Sigmoid colon (tissue), 7 donors: ENCODE measurements at regions of chr10 and their contacts with region 1.

Region 1: GRCh38 chr10:93376372-93377293 is 105.5 kb downstream of the MYOF start:
- DNase-seq: peak; percentile 87
- H3K4me3 ChIP-seq: peak overlapping the region in 2 of 4 donors; percentile 5 to 22
- H3K27ac ChIP-seq: peak overlapping the region; percentile 82 to 90 (median 84)
- H3K4me1 ChIP-seq: peaks cover 0 to 43% (median 30%) of the 10 kb centered on the region in 4 donors
- H3K27me3 ChIP-seq: no peaks in the 10 kb centered on the region
- CTCF ChIP-seq: peak; percentile 91 to 98 (median 97)
- EP300 ChIP-seq: no peak
- POLR2A ChIP-seq: peak in 1 of 2 donors; percentile 34

Region 2: DNA sequence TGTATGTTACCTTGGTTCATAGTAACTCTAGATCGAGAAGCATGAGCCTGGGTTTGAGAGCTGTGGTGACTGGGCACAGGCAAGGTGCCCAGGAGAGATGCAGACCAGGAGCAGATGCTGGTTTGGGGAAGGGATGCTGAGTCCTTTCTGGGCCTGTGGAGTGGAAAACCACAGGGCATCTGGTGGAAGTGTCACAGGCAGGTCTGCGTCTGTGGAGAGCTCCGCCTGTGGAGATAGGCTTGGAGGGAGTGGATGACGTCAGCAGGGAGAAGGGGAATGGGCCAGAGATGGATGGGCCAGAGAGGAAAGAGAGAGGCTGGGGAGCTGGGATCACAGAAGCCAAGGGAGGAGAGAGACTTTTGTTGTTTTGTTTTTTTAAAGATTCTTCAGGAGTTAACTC is 288.2 kb before region 1 on chr10:
- intact Hi-C with region 1: no loop called
- DNase-seq: no peak
- H3K4me3 ChIP-seq: no peak overlapping the region
- H3K27ac ChIP-seq: no peak overlapping the region
- H3K4me1 ChIP-seq: no peaks in the 10 kb centered on the region
- H3K27me3 ChIP-seq: no peaks in the 10 kb centered on the region
- CTCF ChIP-seq: no peak
- EP300 ChIP-seq: no peak
- POLR2A ChIP-seq: no peak

Region 3: DNA sequence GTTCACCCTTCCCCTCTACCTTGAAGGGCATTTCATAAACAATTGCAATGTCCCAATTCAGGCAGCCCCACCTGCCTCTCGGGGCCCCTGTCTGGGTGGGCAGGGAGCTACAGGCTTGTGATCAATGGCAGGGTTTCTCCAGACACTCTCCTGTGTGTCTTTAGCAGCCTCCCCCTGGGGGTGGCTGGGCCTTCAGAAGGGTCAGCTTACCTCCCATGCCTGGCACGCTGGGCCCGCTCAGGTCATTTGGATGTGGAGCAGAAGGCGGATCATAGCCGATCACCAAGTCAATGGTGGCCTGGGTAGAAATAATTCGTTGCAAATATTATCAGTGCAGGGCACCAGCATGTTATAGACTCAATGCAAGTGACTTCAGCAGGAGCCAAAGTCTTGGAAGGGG is 49.2 kb after region 1 on chr10:
- intact Hi-C with region 1: loop called (anchors 5 kb)
- DNase-seq: no peak
- H3K4me3 ChIP-seq: no peak overlapping the region
- H3K27ac ChIP-seq: peak overlapping the region in 1 of 4 donors; percentile 39
- H3K4me1 ChIP-seq: peaks cover 0 to 39% (median 27%) of the 10 kb centered on the region in 4 donors
- H3K27me3 ChIP-seq: no peaks in the 10 kb centered on the region
- CTCF ChIP-seq: no peak
- EP300 ChIP-seq: no peak
- POLR2A ChIP-seq: no peak

Region 4: GRCh38 chr10:93482145-93482834 is 105.7 kb after region 1 on chr10 and contains the start of gene MYOF:
- intact Hi-C with region 1: loop called (anchors 1 kb)
- DNase-seq: peak; percentile 88
- H3K4me3 ChIP-seq: peak within 1 kb of the TSS; percentile 54 to 65 (median 58)
- H3K27ac ChIP-seq: peak within 1 kb of the TSS; percentile 84 to 95 (median 91)
- H3K4me1 ChIP-seq: peaks cover 0 to 37% (median 28%) of the 10 kb centered on the region in 4 donors
- H3K27me3 ChIP-seq: no peaks in the 10 kb centered on the region
- CTCF ChIP-seq: peak; percentile 32 to 64 (median 54)
- EP300 ChIP-seq: no peak
- POLR2A ChIP-seq: peak; percentile 78 to 91
- total RNA-seq, gene MYOF: 33.6 to 83.4 (median 70.2) TPM

Region 5: DNA sequence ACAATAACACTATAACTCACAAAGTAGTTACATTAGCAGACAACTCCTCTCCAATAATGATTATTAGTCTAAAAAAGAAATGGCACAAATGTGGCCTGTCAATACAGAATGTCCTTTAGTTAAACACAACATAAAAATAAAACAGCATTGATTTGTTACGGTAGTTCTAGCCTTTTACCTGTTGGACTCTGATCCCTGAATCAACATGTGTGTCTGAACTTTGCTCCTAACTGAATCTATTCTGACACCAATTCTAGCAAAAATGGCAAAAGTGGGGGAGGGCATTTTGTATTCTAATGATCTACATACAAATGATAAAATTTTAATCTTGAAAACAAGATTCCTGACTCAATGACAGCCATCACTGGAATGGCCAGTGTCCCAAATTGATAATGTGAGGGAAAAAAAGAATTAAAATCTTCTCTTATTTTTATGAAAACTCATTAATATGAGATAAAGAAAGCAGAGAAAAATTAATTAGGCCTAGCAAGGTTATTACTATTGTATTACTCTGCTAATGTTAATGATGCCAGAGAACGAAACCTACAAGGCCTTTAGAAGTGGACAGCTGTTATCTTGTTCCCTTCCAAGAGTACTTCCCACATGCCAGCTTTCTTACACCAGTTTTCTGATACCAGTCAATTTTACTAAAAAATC is 295.5 kb after region 1 on chr10:
- intact Hi-C with region 1: no loop called
- DNase-seq: no peak
- H3K4me3 ChIP-seq: no peak overlapping the region
- H3K27ac ChIP-seq: no peak overlapping the region
- H3K4me1 ChIP-seq: no peaks in the 10 kb centered on the region
- H3K27me3 ChIP-seq: no peaks in the 10 kb centered on the region
- CTCF ChIP-seq: no peak
- EP300 ChIP-seq: no peak
- POLR2A ChIP-seq: no peak